ENCODE measurements at regions of chr17 and their contacts with region 1.

Region 1: DNA sequence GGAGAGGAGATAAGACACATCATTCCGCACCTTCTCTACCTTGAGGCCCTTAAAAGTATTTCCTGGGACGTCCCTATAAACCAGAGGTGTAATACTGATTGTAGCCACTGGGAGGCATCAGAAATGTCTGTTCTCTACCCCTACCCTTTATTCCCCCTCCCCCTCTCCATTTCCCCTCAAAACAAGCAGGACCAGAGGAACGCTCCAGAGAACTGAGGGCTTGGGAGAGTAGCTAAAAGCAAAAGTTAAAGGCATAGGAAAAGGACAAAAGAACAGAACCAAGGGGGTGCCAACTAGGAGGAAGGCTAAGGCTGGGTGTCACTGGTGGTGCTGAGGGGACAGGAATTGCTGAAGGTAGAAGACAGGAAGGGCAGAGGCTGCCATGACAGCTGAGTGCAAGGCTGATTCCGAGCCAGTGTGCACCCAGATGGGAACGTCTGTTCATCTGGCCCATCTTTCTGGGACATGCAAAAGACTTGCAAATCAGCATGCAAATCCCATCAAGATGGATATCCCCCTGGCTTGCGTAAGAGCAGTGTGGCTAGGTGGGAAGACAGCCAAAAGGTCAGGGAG is 6.7 kb downstream of the CAMTA2 start:
- DNase-seq: no peak
- ATAC-seq: peak; percentile 45 to 67

Region 2: GRCh38 chr17:5055543-5055942 is 74.8 kb after region 1 on chr17:
- intact Hi-C with region 1: loop called (anchors 5 kb)
- DNase-seq: no peak
- ATAC-seq: no peak

Measured in left cardiac atrium (tissue), 4 donors.